Left colon (tissue), 2 donors: ENCODE measurements at regions of chr4 and their contacts with region 1.

Region 1: DNA sequence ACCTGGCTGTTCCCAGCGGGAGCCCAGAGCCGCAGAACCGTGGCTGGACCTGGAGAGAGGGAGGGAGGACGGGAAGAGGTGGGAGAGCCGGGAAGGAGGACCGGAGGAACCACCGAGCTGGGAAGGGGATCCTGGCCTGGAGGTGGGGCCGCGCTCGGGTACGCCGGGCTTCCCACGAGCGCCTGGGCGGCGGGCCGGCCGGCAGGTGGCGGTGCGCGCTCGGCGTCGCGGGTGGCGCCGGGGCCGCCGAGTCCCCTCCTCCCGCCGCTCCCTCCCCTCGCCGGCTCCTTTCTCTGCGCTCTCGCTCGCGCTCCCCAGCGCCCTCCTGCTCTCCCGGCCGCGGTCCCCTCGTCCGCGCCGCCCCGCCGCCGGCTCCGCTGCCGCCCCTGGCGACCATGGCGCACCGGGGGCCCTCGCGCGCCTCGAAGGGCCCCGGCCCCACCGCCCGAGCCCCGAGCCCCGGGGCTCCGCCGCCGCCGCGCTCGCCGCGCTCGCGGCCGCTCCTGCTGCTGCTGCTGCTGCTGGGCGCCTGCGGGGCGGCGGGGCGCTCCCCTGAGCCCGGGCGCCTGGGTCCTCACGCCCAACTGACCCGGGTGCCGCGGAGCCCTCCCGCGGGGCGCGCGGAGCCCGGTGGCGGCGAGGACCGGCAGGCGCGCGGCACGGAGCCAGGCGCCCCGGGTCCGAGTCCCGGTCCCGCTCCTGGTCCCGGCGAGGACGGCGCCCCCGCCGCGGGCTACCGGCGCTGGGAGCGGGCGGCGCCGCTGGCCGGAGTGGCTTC is at the start of gene SORCS2:
- DNase-seq: peak in 1 of 2 donors; percentile 60
- ATAC-seq: peak; percentile 87
- total RNA-seq, gene SORCS2: 0.21 to 0.92 TPM

Region 2: GRCh38 chr4:6768539-6768905 is 423.9 kb before region 1 on chr4:
- intact Hi-C with region 1: no loop called
- DNase-seq: peak in 1 of 2 donors; percentile 49
- ATAC-seq: peak; percentile 4

Region 3: GRCh38 chr4:6986781-6987587 is 205.5 kb before region 1 on chr4:
- intact Hi-C with region 1: no loop called
- DNase-seq: peak; percentile 94 to 97
- ATAC-seq: peak; percentile 91

Region 4: DNA sequence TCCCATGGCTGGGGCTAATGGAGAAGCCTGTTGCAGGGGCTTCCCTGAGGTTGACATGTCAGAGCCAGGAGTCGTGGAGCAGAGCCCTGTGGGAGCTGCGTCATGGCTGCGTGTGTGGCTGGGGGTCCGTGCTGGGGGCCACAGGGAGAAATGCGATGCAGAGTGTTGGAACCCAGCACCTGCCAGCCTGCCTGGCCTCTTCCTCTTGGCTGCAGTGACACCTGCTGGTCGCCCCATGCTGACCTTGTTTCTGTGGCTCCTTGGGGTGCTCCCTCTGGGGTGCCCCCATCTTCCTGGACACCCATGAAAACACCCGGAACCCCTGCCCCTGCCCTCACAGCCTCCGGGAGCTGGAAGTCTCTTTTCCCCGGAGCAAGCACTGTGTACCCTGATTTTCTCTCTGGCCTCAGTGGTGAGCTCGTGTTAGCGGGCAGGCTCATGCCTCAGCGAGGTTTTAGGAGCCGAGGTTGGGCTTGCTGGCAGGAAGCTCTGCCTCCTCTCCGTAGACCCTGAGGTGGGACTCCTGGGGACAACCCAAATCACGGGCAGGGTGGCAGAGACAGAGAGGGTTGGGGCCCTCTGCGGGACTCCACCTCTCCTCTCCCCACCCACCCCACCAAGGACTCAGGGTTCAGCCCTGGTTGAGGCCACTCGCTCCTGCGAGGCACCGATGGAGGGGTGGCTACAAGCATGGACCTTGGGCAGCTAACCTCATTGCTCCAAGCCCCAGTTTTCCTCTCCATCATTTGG is 103.6 kb after region 1 on chr4:
- intact Hi-C with region 1: loop called in 1 of 2 experiments (anchors 5 kb)
- DNase-seq: peak in 1 of 2 donors; percentile 35
- ATAC-seq: peak; percentile 48

Region 5: DNA sequence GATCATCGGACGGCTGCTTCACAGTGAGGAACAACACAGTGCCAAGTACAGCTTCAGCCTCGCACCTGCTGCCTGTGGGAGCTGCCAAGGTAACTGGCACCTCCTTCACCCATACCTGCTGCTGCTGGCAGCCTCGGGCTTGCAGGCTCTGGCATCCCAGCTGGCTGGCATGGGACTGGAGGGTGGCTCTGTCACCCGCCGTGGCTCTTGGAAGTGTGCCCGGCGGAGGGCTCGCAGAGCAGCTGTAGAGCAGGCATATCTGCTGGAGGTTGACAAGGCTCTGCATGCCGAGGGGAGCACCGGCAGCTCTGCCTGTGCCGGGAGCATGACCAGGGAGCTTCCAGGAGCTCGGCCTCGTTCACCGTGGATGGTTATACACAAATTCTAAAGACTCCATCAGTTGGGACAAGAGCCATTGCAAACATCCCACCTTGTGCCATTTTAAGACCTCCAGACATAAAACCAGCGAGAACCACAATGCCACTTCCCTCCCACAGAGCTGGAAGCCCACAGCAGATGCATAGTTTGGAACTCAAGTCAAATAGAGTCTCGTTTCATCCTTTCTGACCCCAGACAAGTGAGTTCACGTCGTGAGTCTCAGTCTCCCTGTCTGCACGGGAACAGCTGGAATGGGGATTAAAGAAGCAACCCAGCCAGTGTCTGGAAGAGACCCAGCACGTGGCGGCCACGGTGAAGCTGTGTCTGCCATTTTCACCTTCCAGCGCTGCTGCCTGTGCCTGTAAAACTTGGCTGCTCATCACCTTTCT is 326.6 kb after region 1 on chr4:
- intact Hi-C with region 1: no loop called
- DNase-seq: no peak
- ATAC-seq: no peak

Region 6: GRCh38 chr4:7719354-7720174 is 527.1 kb after region 1 on chr4:
- intact Hi-C with region 1: loop called in 1 of 2 experiments (anchors 10 kb)
- DNase-seq: peak in 1 of 2 donors; percentile 65
- ATAC-seq: peak; percentile 55